K562 (cell line): ENCODE measurements at regions of chr22 and their contacts with region 1.

Region 1: GRCh38 chr22:25465949-25466348 is 98.5 kb upstream of the GRK3 start:
- DNase-seq: no peak
- ATAC-seq: no peak
- H3K4me3 ChIP-seq: no peak overlapping the region
- H3K27ac ChIP-seq: no peak overlapping the region
- H3K4me1 ChIP-seq: no peaks in the 10 kb centered on the region
- H3K27me3 ChIP-seq: no peaks in the 10 kb centered on the region
- CTCF ChIP-seq: no peak
- EP300 ChIP-seq: no peak
- POLR2A ChIP-seq: no peak
- RAD21 ChIP-seq: no peak

Region 2: GRCh38 chr22:25702040-25702439 is 236.1 kb after region 1 on chr22:
- CTCF ChIA-PET with region 1: interaction called, 17 read pairs
- POLR2A ChIA-PET with region 1: no interaction called
- in situ Hi-C with region 1: loop called (anchors 10 kb)
- intact Hi-C with region 1: loop called (anchors 2 kb)
- DNase-seq: no peak
- ATAC-seq: no peak
- H3K4me3 ChIP-seq: no peak overlapping the region
- H3K27ac ChIP-seq: no peak overlapping the region
- H3K4me1 ChIP-seq: no peaks in the 10 kb centered on the region
- H3K27me3 ChIP-seq: no peaks in the 10 kb centered on the region
- CTCF ChIP-seq: peak in 2 of 3 experiments; percentile 16 to 51; a peak in 2 of 6 replicates
- EP300 ChIP-seq: no peak
- POLR2A ChIP-seq: no peak
- RAD21 ChIP-seq: peak; percentile 47 to 68

Region 3: GRCh38 chr22:25772288-25772687 is 306.3 kb after region 1 on chr22:
- CTCF ChIA-PET with region 1: interaction called, 14 read pairs
- POLR2A ChIA-PET with region 1: interaction called, 3 read pairs
- in situ Hi-C with region 1: loop called (anchors 5 kb)
- intact Hi-C with region 1: loop called (anchors 2 kb)
- DNase-seq: no peak
- ATAC-seq: no peak
- H3K4me3 ChIP-seq: no peak overlapping the region
- H3K27ac ChIP-seq: no peak overlapping the region
- H3K4me1 ChIP-seq: no peaks in the 10 kb centered on the region; a peak in 1 of 5 replicates
- H3K27me3 ChIP-seq: no peaks in the 10 kb centered on the region
- CTCF ChIP-seq: no peak
- EP300 ChIP-seq: no peak
- POLR2A ChIP-seq: no peak
- RAD21 ChIP-seq: no peak